Naive thymus-derived CD4-positive, alpha-beta T cell (primary cell): ENCODE measurements at regions of chr2 and their contacts with region 1.

Region 1: GRCh38 chr2:165015052-165015642 is 59.8 kb upstream of the SLC38A11 start:
- DNase-seq: peak in 7 of 9 donors; percentile 21 to 44 (median 31)
- ATAC-seq: peak; percentile 59
- H3K4me3 ChIP-seq: no peak overlapping the region
- H3K4me3 Mint-ChIP-seq: no peak overlapping the region
- H3K27ac ChIP-seq: no peak overlapping the region
- H3K27ac Mint-ChIP-seq: no peak overlapping the region
- H3K4me1 ChIP-seq: no peaks in the 10 kb centered on the region
- H3K4me1 Mint-ChIP-seq: peaks cover 0 to 2% (median 0%) of the 10 kb centered on the region in 7 donors
- H3K27me3 ChIP-seq: no peaks in the 10 kb centered on the region
- H3K27me3 Mint-ChIP-seq: peaks cover 0 to 24% (median 9%) of the 10 kb centered on the region in 5 donors

Region 2: GRCh38 chr2:164479460-164479859 is 535.7 kb before region 1 on chr2:
- CTCF ChIA-PET with region 1: no interaction called
- POLR2A ChIA-PET with region 1: no interaction called
- intact Hi-C with region 1: no loop called
- DNase-seq: no peak
- ATAC-seq: no peak
- H3K4me3 ChIP-seq: no peak overlapping the region
- H3K4me3 Mint-ChIP-seq: no peak overlapping the region
- H3K27ac ChIP-seq: no peak overlapping the region
- H3K27ac Mint-ChIP-seq: no peak overlapping the region
- H3K4me1 ChIP-seq: no peaks in the 10 kb centered on the region
- H3K4me1 Mint-ChIP-seq: no peaks in the 10 kb centered on the region
- H3K27me3 ChIP-seq: no peaks in the 10 kb centered on the region
- H3K27me3 Mint-ChIP-seq: no peaks in the 10 kb centered on the region

Region 3: GRCh38 chr2:164737612-164738081 is 277.5 kb before region 1 on chr2:
- CTCF ChIA-PET with region 1: no interaction called
- POLR2A ChIA-PET with region 1: no interaction called
- intact Hi-C with region 1: loop called in 1 of 2 experiments (anchors 10 kb)
- DNase-seq: peak in 2 of 9 donors; percentile 2 to 21
- ATAC-seq: peak; percentile 60
- H3K4me3 ChIP-seq: no peak overlapping the region
- H3K4me3 Mint-ChIP-seq: no peak overlapping the region
- H3K27ac ChIP-seq: no peak overlapping the region
- H3K27ac Mint-ChIP-seq: no peak overlapping the region
- H3K4me1 ChIP-seq: no peaks in the 10 kb centered on the region
- H3K4me1 Mint-ChIP-seq: no peaks in the 10 kb centered on the region
- H3K27me3 ChIP-seq: no peaks in the 10 kb centered on the region
- H3K27me3 Mint-ChIP-seq: peaks cover 0 to 9% (median 4%) of the 10 kb centered on the region in 5 donors

Region 4: GRCh38 chr2:164992818-164993217 is 22.3 kb before region 1 on chr2:
- CTCF ChIA-PET with region 1: no interaction called
- POLR2A ChIA-PET with region 1: no interaction called
- intact Hi-C with region 1: loop called in 1 of 2 experiments (anchors 2 kb)
- DNase-seq: peak in 7 of 9 donors; percentile 29 to 54 (median 42)
- ATAC-seq: peak; percentile 68
- H3K4me3 ChIP-seq: no peak overlapping the region
- H3K4me3 Mint-ChIP-seq: no peak overlapping the region
- H3K27ac ChIP-seq: no peak overlapping the region
- H3K27ac Mint-ChIP-seq: no peak overlapping the region
- H3K4me1 ChIP-seq: no peaks in the 10 kb centered on the region
- H3K4me1 Mint-ChIP-seq: peaks cover 10 to 36% (median 16%) of the 10 kb centered on the region in 7 donors
- H3K27me3 ChIP-seq: no peaks in the 10 kb centered on the region
- H3K27me3 Mint-ChIP-seq: no peaks in the 10 kb centered on the region

Region 5: DNA sequence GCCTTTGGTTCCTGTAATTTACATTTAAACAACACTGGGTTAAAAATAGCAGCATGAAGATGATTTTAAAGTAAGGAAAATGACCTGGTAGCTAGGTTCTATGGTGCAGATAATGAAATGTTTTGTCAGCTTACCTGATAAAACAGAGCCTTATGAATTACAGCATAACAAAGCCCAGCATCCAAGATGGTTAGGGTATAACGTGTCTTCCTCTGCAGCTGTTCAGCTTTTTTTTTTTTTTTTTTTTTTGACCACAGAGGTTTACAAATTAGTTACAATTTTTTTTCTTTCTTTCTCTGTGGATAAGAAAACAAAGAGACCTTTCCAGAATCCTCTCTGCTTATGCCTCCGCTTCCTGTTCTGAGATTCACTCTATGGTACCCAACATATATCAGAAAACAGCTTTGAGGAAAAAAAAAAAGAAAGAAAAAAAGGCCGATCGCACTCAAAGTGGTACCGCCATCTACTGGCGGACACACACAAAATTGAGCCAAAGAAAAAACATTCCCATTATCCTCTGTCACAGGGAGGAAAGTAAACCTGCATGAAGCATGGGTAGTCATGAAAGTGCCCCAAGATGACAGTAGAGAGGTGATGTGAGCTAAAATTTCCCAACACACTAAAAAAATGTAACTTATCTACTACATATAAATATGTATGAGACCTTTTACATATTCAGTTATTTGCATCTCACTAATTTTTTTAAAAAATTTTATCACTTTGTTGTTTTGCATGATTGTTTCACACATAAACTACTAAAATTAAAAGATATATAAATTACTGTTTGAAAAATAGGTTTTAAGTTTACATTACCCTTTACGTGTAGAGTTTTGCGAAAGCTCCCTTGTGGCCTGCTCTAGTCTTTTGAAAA is 188.8 kb after region 1 on chr2 and contains the start of gene SCN3A:
- CTCF ChIA-PET with region 1: no interaction called
- POLR2A ChIA-PET with region 1: no interaction called
- intact Hi-C with region 1: loop called (anchors 5 to 10 kb)
- DNase-seq: peak in 2 of 9 donors; percentile 8 to 15
- ATAC-seq: no peak
- H3K4me3 ChIP-seq: no peak within 1 kb of the TSS
- H3K4me3 Mint-ChIP-seq: peak within 1 kb of the TSS in 7 of 10 donors; percentile 19 to 72 (median 55)
- H3K27ac ChIP-seq: no peak within 1 kb of the TSS
- H3K27ac Mint-ChIP-seq: peak within 1 kb of the TSS in 1 of 9 donors; percentile 77
- H3K4me1 ChIP-seq: no peaks in the 10 kb centered on the region
- H3K4me1 Mint-ChIP-seq: peaks cover 0 to 8% (median 3%) of the 10 kb centered on the region in 7 donors
- H3K27me3 ChIP-seq: no peaks in the 10 kb centered on the region
- H3K27me3 Mint-ChIP-seq: peaks cover 0 to 10% (median 4%) of the 10 kb centered on the region in 5 donors
- total RNA-seq, gene SCN3A: 0.02 to 0.64 (median 0.14) TPM in 4 of 5 experiments, not detected in the other

Region 6: DNA sequence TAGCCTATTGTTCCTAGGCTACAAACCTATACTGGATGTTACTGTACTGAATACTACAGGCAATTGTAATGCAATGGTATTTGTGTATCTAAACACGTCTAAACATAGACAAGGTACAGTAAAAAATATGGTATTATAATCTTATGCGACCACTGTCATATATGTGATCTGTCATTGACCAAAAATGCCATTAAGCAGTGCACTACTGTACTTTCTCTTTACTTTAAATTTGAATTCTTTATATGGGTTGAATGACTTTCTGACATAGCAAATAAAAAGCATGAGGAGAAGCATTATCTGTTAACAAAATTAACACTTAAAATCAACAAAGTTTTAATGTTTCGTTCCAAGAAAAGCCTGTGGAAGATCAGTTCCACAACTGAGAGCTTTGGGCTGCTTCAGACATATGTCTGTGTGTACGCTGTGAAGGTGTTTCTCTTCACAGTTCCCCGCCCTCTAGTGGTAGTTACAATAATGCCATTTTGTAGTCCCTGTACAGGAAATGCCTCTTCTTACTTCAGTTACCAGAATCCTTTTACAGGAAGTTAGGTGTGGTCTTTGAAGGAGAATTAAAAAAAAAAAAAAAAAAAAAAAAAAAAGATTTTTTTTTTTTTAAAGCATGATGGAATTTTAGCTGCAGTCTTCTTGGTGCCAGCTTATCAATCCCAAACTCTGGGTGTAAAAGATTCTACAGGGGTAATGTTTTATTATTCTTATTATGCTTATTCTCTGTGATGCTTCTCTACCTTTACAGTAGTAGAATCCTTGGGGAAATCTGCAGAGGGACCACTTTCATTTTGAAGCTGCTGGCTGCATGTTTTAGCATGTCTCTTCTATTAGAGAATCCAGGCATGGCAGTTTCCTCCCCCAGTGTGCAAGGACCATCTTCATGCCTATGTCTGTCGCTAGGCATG is 278.6 kb after region 1 on chr2:
- CTCF ChIA-PET with region 1: no interaction called
- POLR2A ChIA-PET with region 1: no interaction called
- intact Hi-C with region 1: loop called (anchors 1 kb)
- DNase-seq: peak in 7 of 9 donors; percentile 78 to 89 (median 86)
- ATAC-seq: peak; percentile 100
- H3K4me3 ChIP-seq: no peak overlapping the region
- H3K4me3 Mint-ChIP-seq: peak overlapping the region in 6 of 10 donors; percentile 6 to 50 (median 24)
- H3K27ac ChIP-seq: no peak overlapping the region
- H3K27ac Mint-ChIP-seq: peak overlapping the region in 2 of 9 donors; percentile 12 to 50
- H3K4me1 ChIP-seq: no peaks in the 10 kb centered on the region
- H3K4me1 Mint-ChIP-seq: peaks cover 0 to 13% (median 6%) of the 10 kb centered on the region in 7 donors
- H3K27me3 ChIP-seq: no peaks in the 10 kb centered on the region
- H3K27me3 Mint-ChIP-seq: peaks cover 6 to 18% (median 8%) of the 10 kb centered on the region in 5 donors

Region 7: GRCh38 chr2:165305391-165306096 is 290.4 kb after region 1 on chr2:
- CTCF ChIA-PET with region 1: no interaction called
- POLR2A ChIA-PET with region 1: no interaction called
- intact Hi-C with region 1: loop called in 1 of 2 experiments (anchors 5 kb)
- DNase-seq: no peak
- ATAC-seq: no peak
- H3K4me3 ChIP-seq: no peak overlapping the region
- H3K4me3 Mint-ChIP-seq: no peak overlapping the region
- H3K27ac ChIP-seq: no peak overlapping the region
- H3K27ac Mint-ChIP-seq: no peak overlapping the region
- H3K4me1 ChIP-seq: no peaks in the 10 kb centered on the region
- H3K4me1 Mint-ChIP-seq: no peaks in the 10 kb centered on the region
- H3K27me3 ChIP-seq: no peaks in the 10 kb centered on the region
- H3K27me3 Mint-ChIP-seq: peaks cover 0 to 19% (median 4%) of the 10 kb centered on the region in 5 donors

Region 8: GRCh38 chr2:165390875-165391274 is 375.7 kb after region 1 on chr2:
- CTCF ChIA-PET with region 1: no interaction called
- POLR2A ChIA-PET with region 1: no interaction called
- intact Hi-C with region 1: loop called in 1 of 2 experiments (anchors 10 kb)
- DNase-seq: no peak
- ATAC-seq: no peak
- H3K4me3 ChIP-seq: no peak overlapping the region
- H3K4me3 Mint-ChIP-seq: no peak overlapping the region
- H3K27ac ChIP-seq: no peak overlapping the region
- H3K27ac Mint-ChIP-seq: no peak overlapping the region
- H3K4me1 ChIP-seq: no peaks in the 10 kb centered on the region
- H3K4me1 Mint-ChIP-seq: peaks cover 0 to 13% (median 3%) of the 10 kb centered on the region in 7 donors
- H3K27me3 ChIP-seq: no peaks in the 10 kb centered on the region
- H3K27me3 Mint-ChIP-seq: peaks cover 11 to 24% (median 16%) of the 10 kb centered on the region in 5 donors